T-cell (primary cell): ENCODE measurements at regions of chr6 and their contacts with region 1.

Region 1: DNA sequence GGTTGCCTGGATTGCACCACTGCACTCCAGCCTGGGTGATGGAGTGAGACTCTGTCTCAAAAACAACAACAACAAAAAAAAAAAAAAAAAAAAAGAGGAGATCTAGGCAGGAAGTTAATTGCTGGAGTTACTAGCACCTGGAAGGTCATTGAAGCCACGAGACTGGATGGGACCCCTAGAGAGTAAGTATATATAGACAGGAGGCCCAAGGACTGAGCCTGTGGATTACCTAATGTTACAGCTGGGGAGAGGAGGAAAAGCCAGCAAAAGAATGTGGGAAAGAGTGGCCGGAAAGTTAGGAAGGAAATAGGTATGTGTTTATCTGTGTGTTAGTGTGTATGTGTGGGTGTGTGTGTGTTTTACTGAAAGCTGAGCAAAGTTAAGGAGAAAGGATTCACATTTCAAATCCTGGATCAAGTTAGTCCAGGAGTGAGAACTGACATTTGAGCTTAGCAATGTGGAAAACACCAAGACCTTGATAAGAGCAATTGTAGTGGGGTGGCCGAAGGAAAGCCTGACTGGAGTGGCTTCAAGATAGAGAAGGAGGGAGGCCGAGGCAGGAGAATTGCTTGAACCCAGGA is 38.4 kb downstream of the ANKRD6 start:
- DNase-seq: no peak
- ATAC-seq: no peak
- H3K4me3 ChIP-seq: no peak overlapping the region
- H3K4me3 Mint-ChIP-seq: no peak overlapping the region
- H3K27ac ChIP-seq: no peak overlapping the region
- H3K27ac Mint-ChIP-seq: no peak overlapping the region
- H3K4me1 ChIP-seq: peaks cover 0 to 16% of the 10 kb centered on the region in 2 experiments
- H3K4me1 Mint-ChIP-seq: peaks cover 9 to 21% (median 20%) of the 10 kb centered on the region in 3 donors
- H3K27me3 ChIP-seq: no peaks in the 10 kb centered on the region
- H3K27me3 Mint-ChIP-seq: no peaks in the 10 kb centered on the region

Region 2: DNA sequence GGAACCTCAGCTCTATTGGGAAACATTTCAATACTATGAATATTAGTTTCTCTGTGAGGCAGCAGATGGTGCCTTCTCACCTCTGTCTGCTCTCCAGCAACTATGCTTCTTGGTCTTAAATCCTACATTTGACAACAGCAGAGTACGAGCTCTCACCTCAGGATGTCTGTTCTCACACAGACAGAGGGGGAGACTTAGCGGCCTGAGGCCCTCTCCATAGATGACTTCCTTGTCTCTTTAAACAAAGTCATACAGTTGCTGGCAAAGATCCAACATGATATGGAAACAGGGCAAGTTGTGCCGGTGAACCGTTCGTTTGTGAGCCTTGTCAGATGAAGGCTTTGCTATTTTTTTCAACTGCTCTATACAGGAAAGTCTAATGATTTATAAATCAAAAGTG is 210.5 kb before region 1 on chr6:
- CTCF ChIA-PET with region 1: no interaction called
- POLR2A ChIA-PET with region 1: no interaction called
- DNase-seq: peak in 1 of 35 experiments; percentile 8
- ATAC-seq: no peak
- H3K4me3 ChIP-seq: no peak overlapping the region
- H3K4me3 Mint-ChIP-seq: no peak overlapping the region
- H3K27ac ChIP-seq: no peak overlapping the region
- H3K27ac Mint-ChIP-seq: no peak overlapping the region
- H3K4me1 ChIP-seq: no peaks in the 10 kb centered on the region
- H3K4me1 Mint-ChIP-seq: peaks cover 0 to 3% (median 0%) of the 10 kb centered on the region in 3 donors
- H3K27me3 ChIP-seq: peaks cover 0 to 8% of the 10 kb centered on the region in 2 experiments
- H3K27me3 Mint-ChIP-seq: peaks cover 0 to 3% of the 10 kb centered on the region in 2 donors

Region 3: DNA sequence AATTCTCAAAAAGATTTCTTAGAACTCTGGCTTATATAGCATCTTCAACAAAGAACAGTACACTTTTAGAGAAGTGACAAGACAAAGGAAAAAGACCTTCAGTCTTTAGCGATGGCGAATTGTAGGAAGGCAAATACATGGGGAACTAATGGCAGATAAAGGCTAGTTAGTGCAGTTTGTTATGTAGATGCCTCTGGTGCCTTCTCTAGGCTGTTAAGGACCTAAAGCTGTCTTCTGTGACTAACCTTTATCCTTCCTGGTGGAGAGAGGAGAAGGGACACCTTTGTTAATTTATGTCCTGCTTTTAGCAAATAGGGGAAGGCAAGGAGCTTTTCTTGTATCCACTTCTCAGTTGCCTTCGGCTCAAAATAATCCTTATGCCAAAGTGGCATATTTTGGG is 31.2 kb before region 1 on chr6:
- CTCF ChIA-PET with region 1: interaction called in 1 of 2 experiments, 10 read pairs
- POLR2A ChIA-PET with region 1: no interaction called
- DNase-seq: no peak
- ATAC-seq: no peak
- H3K4me3 ChIP-seq: no peak overlapping the region
- H3K4me3 Mint-ChIP-seq: no peak overlapping the region
- H3K27ac ChIP-seq: no peak overlapping the region
- H3K27ac Mint-ChIP-seq: no peak overlapping the region
- H3K4me1 ChIP-seq: no peaks in the 10 kb centered on the region
- H3K4me1 Mint-ChIP-seq: peaks cover 1 to 13% (median 6%) of the 10 kb centered on the region in 3 donors
- H3K27me3 ChIP-seq: peaks cover 0 to 2% of the 10 kb centered on the region in 2 experiments
- H3K27me3 Mint-ChIP-seq: peaks cover 0 to 6% of the 10 kb centered on the region in 2 donors

Region 4: DNA sequence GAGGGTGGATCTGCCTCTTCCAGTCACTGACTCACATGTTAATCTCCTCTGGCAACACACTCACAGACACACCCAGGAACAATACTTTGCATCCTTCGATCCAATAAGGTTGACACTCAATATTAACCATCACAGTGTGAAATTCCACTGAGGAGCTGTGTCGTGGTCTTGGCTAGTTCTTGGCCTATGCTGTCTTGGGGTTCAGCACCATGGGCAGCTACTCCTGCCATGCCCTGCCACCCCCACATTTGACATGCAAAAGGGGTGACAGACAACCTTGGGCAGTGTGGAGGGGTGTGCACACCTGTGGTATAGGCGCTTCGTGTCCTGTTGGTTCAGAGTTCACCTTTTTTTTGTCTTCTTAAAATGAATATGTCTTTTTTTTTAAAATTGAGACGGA is 12.7 kb before region 1 on chr6:
- CTCF ChIA-PET with region 1: no interaction called
- POLR2A ChIA-PET with region 1: interaction called, 3 to 20 read pairs
- DNase-seq: no peak
- ATAC-seq: no peak
- H3K4me3 ChIP-seq: no peak overlapping the region
- H3K4me3 Mint-ChIP-seq: no peak overlapping the region
- H3K27ac ChIP-seq: no peak overlapping the region
- H3K27ac Mint-ChIP-seq: no peak overlapping the region
- H3K4me1 ChIP-seq: no peaks in the 10 kb centered on the region
- H3K4me1 Mint-ChIP-seq: no peaks in the 10 kb centered on the region
- H3K27me3 ChIP-seq: no peaks in the 10 kb centered on the region
- H3K27me3 Mint-ChIP-seq: no peaks in the 10 kb centered on the region

Region 5: DNA sequence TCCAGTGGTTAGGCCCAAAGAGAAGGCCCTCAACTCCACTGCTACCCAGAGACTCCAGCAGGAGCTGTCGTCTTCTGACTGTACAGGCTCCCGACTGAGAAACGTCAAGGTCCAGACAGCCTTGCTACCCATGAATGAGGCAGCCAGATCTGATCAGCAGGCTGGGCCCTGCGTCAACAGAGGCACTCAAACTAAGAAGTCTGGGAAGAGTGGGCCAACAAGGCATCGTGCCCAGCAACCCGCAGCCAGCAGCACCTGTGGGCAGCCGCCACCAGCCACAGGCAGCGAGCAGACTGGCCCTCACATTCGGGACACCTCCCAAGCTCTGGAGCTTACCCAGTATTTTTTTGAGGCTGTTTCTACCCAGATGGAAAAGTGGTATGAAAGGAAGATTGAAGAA is 159.1 kb after region 1 on chr6:
- CTCF ChIA-PET with region 1: no interaction called
- POLR2A ChIA-PET with region 1: no interaction called
- DNase-seq: no peak
- ATAC-seq: no peak
- H3K4me3 ChIP-seq: no peak overlapping the region
- H3K4me3 Mint-ChIP-seq: no peak overlapping the region
- H3K27ac ChIP-seq: no peak overlapping the region
- H3K27ac Mint-ChIP-seq: no peak overlapping the region
- H3K4me1 ChIP-seq: no peaks in the 10 kb centered on the region
- H3K4me1 Mint-ChIP-seq: peaks cover 0 to under 1% (median 0%) of the 10 kb centered on the region in 3 donors
- H3K27me3 ChIP-seq: no peaks in the 10 kb centered on the region
- H3K27me3 Mint-ChIP-seq: no peaks in the 10 kb centered on the region